ENCODE measurements at regions of chr4 and their contacts with region 1.

Region 1: DNA sequence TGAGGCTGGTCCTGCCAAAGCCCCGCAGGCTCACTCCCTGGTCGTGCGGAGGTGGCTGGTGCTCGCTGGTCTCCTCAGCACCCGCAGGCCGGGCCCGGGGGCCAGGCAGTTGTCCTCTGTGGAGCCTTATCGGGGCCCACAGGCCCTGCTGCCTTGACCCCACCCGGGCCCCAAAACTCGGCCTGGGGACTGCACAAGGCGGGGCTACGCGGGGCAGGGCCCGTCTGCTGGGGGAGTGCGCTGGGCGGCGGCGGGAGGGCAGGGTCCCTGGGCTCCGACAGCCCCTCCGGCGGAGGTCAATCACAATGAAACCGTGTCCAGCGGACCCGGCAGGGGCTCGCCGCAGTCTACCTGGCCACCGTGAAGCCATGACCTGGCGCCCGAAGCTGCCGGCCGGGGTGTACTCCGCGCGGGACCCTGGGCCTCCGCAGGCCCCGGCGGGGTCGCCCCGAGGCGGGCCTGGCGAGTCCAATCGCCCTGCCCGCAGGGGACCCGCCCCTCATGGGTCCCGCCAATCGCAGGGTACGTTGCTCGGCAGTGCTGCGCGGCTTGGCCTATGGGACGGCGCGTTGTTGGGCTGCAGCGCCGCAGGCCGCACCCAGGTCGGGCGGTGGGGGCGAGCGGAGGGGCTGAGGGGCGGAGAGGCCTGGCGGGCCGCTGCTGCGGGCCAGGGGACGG is at the start of gene ADD1:
- DNase-seq: peak; percentile 91
- ATAC-seq: peak; percentile 98 to 99
- total RNA-seq, gene ADD1: 200 to 209 TPM

Region 2: GRCh38 chr4:2647403-2648158 is 195.8 kb before region 1 on chr4:
- intact Hi-C with region 1: no loop called
- DNase-seq: no peak
- ATAC-seq: no peak

Region 3: DNA sequence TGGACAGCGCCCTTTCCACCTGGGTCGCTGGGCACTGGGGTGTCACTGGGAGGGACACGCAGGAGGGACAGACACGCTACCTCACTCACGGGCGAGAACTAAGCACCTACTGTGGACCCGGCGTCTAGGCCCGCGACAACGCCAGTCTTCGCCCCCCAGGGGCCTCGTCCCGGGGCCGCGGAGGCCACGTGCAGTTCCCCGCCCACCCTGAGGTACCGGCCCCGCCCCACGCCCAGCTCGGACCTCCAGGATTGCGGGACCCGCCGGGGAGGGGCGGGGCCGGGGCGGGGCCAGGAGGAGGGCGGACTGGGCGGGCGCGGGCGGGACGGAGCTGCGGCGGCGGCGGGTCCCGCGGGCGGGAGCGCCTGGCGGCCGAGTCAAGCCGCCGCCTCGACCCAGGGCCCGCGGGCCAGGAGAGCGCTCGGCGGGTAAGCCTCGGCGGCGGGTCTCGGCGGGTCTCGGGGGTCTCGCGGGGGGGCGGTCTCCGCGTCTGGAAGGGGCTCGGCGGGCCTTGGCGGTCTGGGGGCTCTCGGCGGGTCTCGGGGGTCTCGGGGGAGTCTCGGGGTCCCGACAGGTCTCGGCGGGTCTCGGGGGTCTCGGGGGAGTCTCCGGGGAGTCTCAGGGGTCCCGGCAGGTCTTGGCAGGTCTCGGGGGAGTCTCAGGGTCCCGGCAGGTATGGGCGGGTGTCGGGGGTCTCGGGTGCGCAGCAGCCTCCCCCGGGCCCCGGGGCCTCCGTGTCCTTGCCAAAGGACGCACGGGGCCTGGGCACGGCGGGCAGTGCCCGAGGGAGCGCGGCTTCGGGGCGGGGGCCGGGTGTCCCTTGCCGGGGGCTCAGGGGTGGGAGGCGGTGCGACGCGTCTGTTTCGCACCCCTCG is 50.5 kb before region 1 on chr4 and contains the start of gene SH3BP2:
- intact Hi-C with region 1: loop called in 1 of 2 experiments (anchors 5 kb)
- DNase-seq: peak; percentile 91
- ATAC-seq: peak; percentile 71 to 74
- total RNA-seq, gene SH3BP2: 28.3 to 28.5 TPM

Region 4: DNA sequence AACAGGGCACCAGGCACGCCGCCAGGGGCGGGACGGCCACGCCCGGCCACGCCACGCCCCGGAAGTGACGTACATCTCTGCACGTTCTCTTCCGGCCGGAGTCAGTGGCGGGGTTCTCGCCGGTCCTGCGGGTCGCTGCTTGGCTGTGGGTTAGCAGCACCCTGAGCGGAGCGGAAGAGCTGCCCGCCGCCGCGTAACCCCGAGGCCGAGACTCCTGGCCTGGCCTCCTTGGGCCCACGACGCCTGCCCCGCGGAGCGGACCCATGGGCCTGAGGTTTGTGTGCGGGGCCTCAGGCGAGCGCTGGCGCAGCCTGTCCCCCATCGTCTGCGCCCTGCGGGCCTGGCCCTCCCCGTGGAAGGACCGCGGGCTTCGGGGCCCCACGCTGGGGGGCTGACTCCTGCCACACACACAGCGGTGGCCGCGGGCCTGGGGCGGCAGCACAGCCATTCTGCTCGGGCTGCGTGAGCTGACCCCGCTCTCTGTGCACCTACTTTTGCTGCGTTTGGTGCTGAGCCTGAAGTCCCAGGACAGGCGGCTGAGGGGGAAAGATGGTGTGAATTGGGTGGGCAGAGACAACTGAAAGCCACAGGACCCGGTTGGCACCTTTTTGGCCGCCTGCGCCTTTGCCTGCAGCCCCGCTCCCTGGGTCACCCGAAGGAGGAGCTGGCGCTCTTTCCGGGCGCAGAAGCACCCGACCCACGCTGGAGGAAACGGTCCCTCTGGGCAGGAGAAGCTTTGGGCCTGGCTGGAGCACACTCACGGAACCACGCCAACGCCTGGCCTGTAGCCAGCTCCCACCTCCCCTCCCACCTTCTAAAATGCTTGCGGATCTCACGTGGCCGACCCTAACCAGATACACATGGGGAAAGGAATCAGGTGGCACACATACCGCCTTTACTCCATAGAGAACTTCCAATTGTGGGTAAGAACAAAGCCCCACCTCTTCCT is 91.7 kb after region 1 on chr4:
- intact Hi-C with region 1: loop called in 1 of 2 experiments (anchors 10 kb)
- DNase-seq: peak; percentile 97
- ATAC-seq: peak; percentile 82 to 90

Measured in left cardiac atrium (tissue), 4 donors.